ENCODE measurements at regions of chr2 and their contacts with region 1.

Region 1: DNA sequence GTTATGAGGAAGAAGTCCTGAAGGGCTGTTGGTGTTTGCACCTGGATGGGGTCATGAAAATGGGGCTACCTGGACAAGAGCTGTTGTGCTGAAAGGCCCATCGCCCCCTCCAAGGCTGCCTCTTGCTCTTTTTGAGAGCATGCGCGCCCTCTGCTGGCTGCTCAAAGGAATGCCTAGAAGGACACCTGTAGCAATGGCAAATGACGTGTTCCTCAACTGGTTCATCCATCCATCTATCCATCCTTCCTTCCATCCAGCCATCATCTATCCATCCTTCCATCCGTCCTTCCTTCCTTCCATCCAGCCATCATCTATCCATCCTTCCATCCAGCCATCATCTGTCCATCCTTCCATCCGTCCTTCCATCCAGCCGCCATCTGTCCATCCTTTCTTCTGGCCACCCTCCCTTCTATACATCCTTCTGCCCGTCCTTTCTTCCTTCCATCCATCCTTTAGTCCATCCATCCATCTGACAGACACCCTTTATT is 17.2 kb upstream of the RPL31 start:
- DNase-seq: peak; percentile 73 to 82 (median 74)
- ATAC-seq: peak; percentile 96
- H3K4me3 ChIP-seq: no peak overlapping the region
- H3K27ac ChIP-seq: no peak overlapping the region
- H3K4me1 ChIP-seq: 0 out of 5 replicates have a peak, but pooled peaks cover 0 to 4% of the 10 kb centered on the region in 2 experiments
- H3K27me3 ChIP-seq: peaks cover 16 to 54% of the 10 kb centered on the region in 2 experiments
- CTCF ChIP-seq: peak; percentile 83 to 88 (median 86)
- EP300 ChIP-seq: no peak
- POLR2A ChIP-seq: no peak
- RAD21 ChIP-seq: peak; percentile 90 to 96

Region 2: DNA sequence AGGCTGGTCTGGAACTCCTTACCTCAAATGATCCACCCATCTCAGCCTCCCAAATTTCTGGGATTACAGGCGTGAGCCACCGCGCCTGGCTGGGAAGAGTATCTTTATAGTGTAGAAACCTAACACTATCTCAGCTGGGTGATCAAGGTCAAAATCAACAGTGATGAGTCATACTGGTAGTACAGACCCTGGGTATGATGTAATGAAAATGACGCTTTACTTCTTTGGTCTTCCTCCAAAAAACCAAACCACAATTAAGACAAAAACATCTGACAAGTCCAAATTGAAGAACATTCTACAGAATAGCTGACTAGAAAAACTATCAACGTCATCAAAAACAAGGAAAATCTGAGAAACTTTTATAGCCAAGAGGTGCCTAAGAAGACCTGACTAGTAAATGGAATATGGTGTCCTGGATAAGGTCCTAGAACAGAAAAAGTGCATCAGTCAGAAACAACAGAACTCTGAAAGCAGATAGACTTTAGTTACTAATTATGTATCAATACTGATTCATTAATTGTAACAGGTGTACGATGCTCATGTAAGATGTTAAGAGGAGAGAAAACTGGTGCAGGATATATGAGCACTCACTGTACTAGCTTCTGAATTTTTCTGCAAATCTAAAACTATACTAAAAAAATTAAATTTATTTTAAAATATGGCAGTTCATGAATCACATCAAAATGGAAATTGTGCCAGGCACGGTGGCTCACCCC is 396.7 kb before region 1 on chr2:
- CTCF ChIA-PET with region 1: interaction called, 11 read pairs
- POLR2A ChIA-PET with region 1: no interaction called
- in situ Hi-C with region 1: no loop called
- intact Hi-C with region 1: no loop called
- DNase-seq: peak; percentile 30 to 43 (median 36)
- ATAC-seq: peak; percentile 83
- H3K4me3 ChIP-seq: no peak overlapping the region
- H3K27ac ChIP-seq: no peak overlapping the region
- H3K4me1 ChIP-seq: peaks cover 3 to 9% of the 10 kb centered on the region in 2 experiments; a peak in 3 of 5 replicates
- H3K27me3 ChIP-seq: no peaks in the 10 kb centered on the region
- CTCF ChIP-seq: no peak
- EP300 ChIP-seq: peak; percentile 21; the same call in 1 of the 2 replicates
- POLR2A ChIP-seq: no peak
- RAD21 ChIP-seq: no peak

Region 3: GRCh38 chr2:100730346-100730745 is 254.6 kb before region 1 on chr2:
- CTCF ChIA-PET with region 1: interaction called, 9 read pairs
- POLR2A ChIA-PET with region 1: no interaction called
- in situ Hi-C with region 1: loop called (anchors 5 kb)
- intact Hi-C with region 1: loop called (anchors 1 kb)
- DNase-seq: peak in 3 of 4 experiments; percentile 13 to 46 (median 23)
- ATAC-seq: peak; percentile 64
- H3K4me3 ChIP-seq: no peak overlapping the region
- H3K27ac ChIP-seq: no peak overlapping the region
- H3K4me1 ChIP-seq: no peaks in the 10 kb centered on the region
- H3K27me3 ChIP-seq: peaks cover 0 to 16% of the 10 kb centered on the region in 2 experiments; a peak in 4 of 5 replicates
- CTCF ChIP-seq: peak; percentile 54 to 62 (median 56)
- EP300 ChIP-seq: no peak
- POLR2A ChIP-seq: no peak
- RAD21 ChIP-seq: peak; percentile 43 to 69

Region 4: DNA sequence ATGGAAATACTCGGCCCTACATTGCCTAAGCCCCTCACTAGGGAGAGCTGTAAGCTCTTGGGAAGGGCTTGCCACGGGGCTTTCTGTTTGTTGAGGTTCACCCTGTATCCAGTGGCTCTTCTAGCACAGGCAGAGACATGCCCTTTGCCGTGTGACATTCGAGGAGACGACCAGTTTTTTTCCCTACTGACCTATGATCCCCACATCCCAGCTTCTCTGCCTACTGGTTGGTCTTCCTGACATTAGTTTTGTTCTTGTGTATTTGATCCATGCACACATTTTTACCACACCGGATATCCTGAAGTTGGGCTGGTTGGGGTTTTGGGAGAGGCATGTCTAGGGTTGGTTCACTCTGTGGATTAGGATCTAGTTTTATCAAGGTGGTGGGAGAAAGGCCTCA is 95.7 kb before region 1 on chr2:
- CTCF ChIA-PET with region 1: no interaction called
- POLR2A ChIA-PET with region 1: no interaction called
- in situ Hi-C with region 1: no loop called
- intact Hi-C with region 1: loop called (anchors 1 kb)
- DNase-seq: peak in 1 of 4 experiments; percentile 11
- ATAC-seq: 0 out of 3 replicates have a peak, but pooled peaks have one; percentile 12
- H3K4me3 ChIP-seq: no peak overlapping the region
- H3K27ac ChIP-seq: no peak overlapping the region
- H3K4me1 ChIP-seq: peaks cover 14 to 26% of the 10 kb centered on the region in 2 experiments
- H3K27me3 ChIP-seq: no peaks in the 10 kb centered on the region
- CTCF ChIP-seq: peak in 2 of 3 experiments; percentile 14 to 32; a peak in 2 of 6 replicates
- EP300 ChIP-seq: no peak
- POLR2A ChIP-seq: no peak
- RAD21 ChIP-seq: peak in 1 of 2 experiments; percentile 32; a peak in 2 of 4 replicates

Region 5: GRCh38 chr2:100924520-100925451 is 60.1 kb before region 1 on chr2:
- CTCF ChIA-PET with region 1: no interaction called
- POLR2A ChIA-PET with region 1: no interaction called
- in situ Hi-C with region 1: no loop called
- intact Hi-C with region 1: no loop called
- DNase-seq: peak in 2 of 4 experiments; percentile 26 to 32
- ATAC-seq: peak; percentile 60
- H3K4me3 ChIP-seq: no peak overlapping the region
- H3K27ac ChIP-seq: peak overlapping the region; percentile 13; the same call in 1 of the 3 replicates
- H3K4me1 ChIP-seq: peaks cover 10 to 28% of the 10 kb centered on the region in 2 experiments
- H3K27me3 ChIP-seq: 0 out of 5 replicates have a peak, but pooled peaks cover 0 to 3% of the 10 kb centered on the region in 2 experiments
- CTCF ChIP-seq: no peak
- EP300 ChIP-seq: no peak
- POLR2A ChIP-seq: no peak
- RAD21 ChIP-seq: no peak